HEK293 (cell line): ENCODE measurements at regions of chr20 and their contacts with region 1.

Region 1: DNA sequence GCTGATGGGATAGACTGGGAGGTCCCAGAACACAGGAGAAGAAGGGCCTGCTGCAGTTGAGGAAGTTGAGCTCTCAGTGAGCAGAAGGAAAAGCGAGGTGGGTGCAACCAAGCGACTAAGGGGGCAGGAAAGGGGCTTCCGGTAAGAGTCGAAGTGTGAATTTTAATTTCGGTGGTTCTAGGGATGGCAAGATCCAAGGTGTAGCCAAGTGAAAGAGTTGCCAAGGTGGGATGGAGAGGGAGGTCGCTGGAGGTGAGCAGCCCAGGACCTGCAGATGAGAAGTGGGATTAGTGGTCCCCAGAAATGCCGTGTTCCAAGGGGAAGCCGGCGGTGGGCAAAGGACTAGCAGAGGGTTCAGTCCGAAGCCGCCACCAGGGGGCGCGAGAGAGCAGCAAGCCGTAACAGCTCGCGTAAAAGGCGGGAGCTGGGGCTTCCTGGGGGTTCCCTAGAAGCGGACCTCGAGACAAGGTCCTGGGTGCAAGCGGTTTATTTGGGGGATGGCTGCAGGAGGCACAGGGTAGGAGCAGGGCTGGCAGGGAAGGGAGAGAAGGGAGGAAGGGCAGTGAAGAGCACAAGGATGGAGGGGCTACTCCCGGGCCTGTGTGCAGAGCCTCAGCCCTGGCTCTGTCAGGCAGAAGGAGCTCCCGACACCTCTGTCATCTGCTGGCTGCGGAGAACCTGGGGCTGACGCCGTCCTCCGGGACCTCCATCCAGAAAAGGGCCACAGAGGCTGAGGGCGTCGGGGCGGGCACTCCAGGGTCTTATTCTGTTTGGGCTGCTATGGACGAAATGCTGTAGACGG is 103.6 kb downstream of the PAX1 start:
- H3K4me3 ChIP-seq: no peak overlapping the region
- H3K27ac ChIP-seq: no peak overlapping the region
- H3K4me1 ChIP-seq: no peaks in the 10 kb centered on the region
- CTCF ChIP-seq: peak; percentile 79

Region 2: DNA sequence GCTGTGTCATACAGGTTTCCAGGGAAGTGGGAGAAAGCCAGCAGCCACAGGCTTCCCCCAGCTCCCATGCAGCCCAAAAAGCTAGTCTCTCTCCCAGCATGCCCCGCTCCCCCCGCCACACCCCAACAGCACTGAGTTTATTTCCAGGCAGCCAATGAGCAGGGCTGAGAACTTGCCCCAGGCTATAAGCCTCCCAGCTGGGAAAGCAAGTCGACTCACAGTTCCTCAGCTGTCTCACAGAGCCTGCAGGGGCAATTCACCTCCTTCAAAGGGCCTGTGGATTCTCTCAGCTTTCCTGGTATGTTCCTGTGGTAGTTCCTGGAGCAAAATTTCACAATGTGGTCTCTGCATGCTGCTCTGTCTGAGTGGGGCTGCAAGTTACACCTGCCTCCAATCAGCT is 69.4 kb before region 1 on chr20:
- CTCF ChIA-PET with region 1: no interaction called
- POLR2A ChIA-PET with region 1: no interaction called
- H3K4me3 ChIP-seq: no peak overlapping the region
- H3K27ac ChIP-seq: no peak overlapping the region
- H3K4me1 ChIP-seq: no peaks in the 10 kb centered on the region
- CTCF ChIP-seq: no peak

Region 3: DNA sequence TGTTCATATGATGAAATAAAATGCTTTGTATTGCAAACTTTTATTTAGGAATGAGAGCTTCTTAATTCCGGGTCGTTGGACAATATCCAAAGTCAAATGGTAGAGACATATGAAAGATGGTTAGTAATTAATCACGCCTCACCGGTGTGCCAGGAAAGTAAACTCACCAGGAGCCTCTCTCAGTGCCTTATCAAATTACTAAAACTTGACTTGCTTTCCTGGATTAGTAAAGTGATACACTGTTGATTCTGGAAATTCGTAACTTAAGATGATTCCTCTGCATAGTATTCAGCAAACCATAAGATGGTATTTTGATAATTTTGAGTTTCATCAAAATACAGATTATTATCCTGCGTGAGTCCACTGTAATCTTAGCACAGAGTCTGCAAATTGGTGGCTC is 11.6 kb after region 1 on chr20:
- CTCF ChIA-PET with region 1: interaction called, 19 read pairs
- POLR2A ChIA-PET with region 1: no interaction called
- H3K4me3 ChIP-seq: no peak overlapping the region
- H3K27ac ChIP-seq: no peak overlapping the region
- H3K4me1 ChIP-seq: no peaks in the 10 kb centered on the region
- CTCF ChIP-seq: no peak